ENCODE measurements at regions of chr12 and their contacts with region 1.

Region 1: GRCh38 chr12:26884765-26885576 is 52.0 kb upstream of the ITPR2 start:
- DNase-seq: peak; percentile 91
- ATAC-seq: peak; percentile 96
- H3K4me3 Mint-ChIP-seq: peak overlapping the region; percentile 46
- H3K27ac Mint-ChIP-seq: peak overlapping the region; percentile 23
- H3K4me1 Mint-ChIP-seq: peaks cover 10% of the 10 kb centered on the region
- H3K27me3 Mint-ChIP-seq: peaks cover 5% of the 10 kb centered on the region

Region 2: DNA sequence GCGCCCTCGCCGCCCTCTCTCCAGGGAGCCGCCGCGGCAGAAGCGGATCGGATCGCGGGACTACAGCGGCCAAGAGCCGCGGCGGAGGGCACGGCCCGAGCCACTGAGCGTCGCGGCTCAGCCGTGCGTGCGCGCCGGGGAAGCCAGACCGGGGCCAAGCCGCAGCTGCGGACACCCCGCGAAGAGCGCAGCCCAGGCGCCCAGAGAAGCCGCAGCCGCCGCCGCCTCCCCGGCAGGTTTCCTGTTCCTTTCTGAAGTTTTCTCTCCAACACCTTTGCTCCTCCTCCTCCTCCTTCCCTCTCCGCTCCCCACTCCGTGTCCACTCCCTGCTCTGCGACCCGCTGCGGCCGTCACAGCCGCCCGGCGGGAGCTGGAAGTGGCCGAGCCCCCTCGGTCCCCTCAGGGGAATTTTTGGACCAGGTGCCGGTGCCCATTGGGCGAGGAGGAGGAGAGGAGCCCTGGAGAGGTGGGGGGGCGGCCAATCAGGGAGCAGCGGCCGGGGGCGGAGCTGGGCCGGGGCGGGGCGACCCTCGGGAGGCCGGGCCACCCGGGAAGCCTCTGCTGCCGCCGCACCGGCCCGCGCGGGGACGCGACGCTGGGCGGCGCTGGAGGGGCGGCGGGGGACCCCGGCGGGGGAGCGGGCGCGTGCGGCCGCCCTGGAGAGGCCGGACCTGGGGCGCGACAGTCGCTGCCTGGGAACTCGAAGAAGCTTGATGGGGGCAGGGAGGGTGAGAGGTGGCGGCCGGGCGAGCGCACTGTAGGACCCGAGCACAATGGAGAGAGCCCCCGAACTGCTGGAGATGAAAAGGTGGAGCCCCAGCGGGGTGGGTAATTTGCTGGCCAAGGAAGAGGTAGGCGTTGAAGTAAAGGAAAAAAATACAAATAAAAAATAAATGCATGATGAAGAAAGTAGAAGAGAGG is 51.9 kb before region 1 on chr12 and contains the start of gene ITPR2:
- CTCF ChIA-PET with region 1: interaction called, 38 read pairs
- POLR2A ChIA-PET with region 1: no interaction called
- DNase-seq: peak; percentile 94
- ATAC-seq: peak; percentile 90
- H3K4me3 Mint-ChIP-seq: peak within 1 kb of the TSS; percentile 93
- H3K27ac Mint-ChIP-seq: peak within 1 kb of the TSS; percentile 95
- H3K4me1 Mint-ChIP-seq: peaks cover 36% of the 10 kb centered on the region
- H3K27me3 Mint-ChIP-seq: no peaks in the 10 kb centered on the region
- total RNA-seq, gene ITPR2: 33.5 to 34.6 TPM

Region 3: GRCh38 chr12:26853303-26854030 is 31.5 kb before region 1 on chr12:
- CTCF ChIA-PET with region 1: interaction called, 50 read pairs
- POLR2A ChIA-PET with region 1: no interaction called
- DNase-seq: peak; percentile 83
- ATAC-seq: peak; percentile 96
- H3K4me3 Mint-ChIP-seq: no peak overlapping the region
- H3K27ac Mint-ChIP-seq: no peak overlapping the region
- H3K4me1 Mint-ChIP-seq: no peaks in the 10 kb centered on the region
- H3K27me3 Mint-ChIP-seq: peaks cover 9% of the 10 kb centered on the region

Region 4: GRCh38 chr12:26870491-26871419 is 14.2 kb before region 1 on chr12:
- CTCF ChIA-PET with region 1: interaction called, 37 read pairs
- POLR2A ChIA-PET with region 1: no interaction called
- DNase-seq: no peak
- ATAC-seq: no peak
- H3K4me3 Mint-ChIP-seq: no peak overlapping the region
- H3K27ac Mint-ChIP-seq: no peak overlapping the region
- H3K4me1 Mint-ChIP-seq: peaks cover 28% of the 10 kb centered on the region
- H3K27me3 Mint-ChIP-seq: no peaks in the 10 kb centered on the region

Region 5: DNA sequence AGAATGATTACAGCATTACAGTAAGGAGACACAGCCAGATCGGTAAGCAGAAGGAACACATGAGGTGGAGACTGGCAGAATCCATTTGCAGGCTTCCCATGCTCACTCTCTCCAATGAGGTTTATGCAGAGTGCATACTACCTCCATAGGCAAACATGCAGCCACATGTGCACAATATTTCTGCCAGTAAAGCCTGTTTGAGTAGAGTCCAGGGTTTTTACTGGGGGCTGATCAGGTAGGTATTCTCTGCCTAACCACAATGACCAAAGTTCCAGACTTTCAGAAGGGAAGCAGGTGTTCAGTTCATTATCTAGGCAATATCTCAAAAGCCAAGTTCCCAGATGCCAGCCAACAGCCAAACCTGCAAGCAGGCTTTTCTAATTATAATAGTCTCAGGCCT is 21.7 kb after region 1 on chr12:
- CTCF ChIA-PET with region 1: interaction called, 15 read pairs
- POLR2A ChIA-PET with region 1: no interaction called
- DNase-seq: no peak
- ATAC-seq: no peak
- H3K4me3 Mint-ChIP-seq: no peak overlapping the region
- H3K27ac Mint-ChIP-seq: no peak overlapping the region
- H3K4me1 Mint-ChIP-seq: peaks cover 5% of the 10 kb centered on the region
- H3K27me3 Mint-ChIP-seq: no peaks in the 10 kb centered on the region

Region 6: GRCh38 chr12:27014085-27014858 is 129.3 kb after region 1 on chr12 and contains the start of gene TM7SF3:
- CTCF ChIA-PET with region 1: interaction called, 26 read pairs
- POLR2A ChIA-PET with region 1: no interaction called
- DNase-seq: peak; percentile 97
- ATAC-seq: peak; percentile 88
- H3K4me3 Mint-ChIP-seq: peak within 1 kb of the TSS; percentile 93
- H3K27ac Mint-ChIP-seq: peak within 1 kb of the TSS; percentile 90
- H3K4me1 Mint-ChIP-seq: peaks cover 58% of the 10 kb centered on the region
- H3K27me3 Mint-ChIP-seq: no peaks in the 10 kb centered on the region
- total RNA-seq, gene TM7SF3: 46.2 to 54.0 TPM

Region 7: GRCh38 chr12:27151479-27151878 is 266.5 kb after region 1 on chr12:
- CTCF ChIA-PET with region 1: no interaction called
- POLR2A ChIA-PET with region 1: no interaction called
- DNase-seq: no peak
- ATAC-seq: no peak
- H3K4me3 Mint-ChIP-seq: no peak overlapping the region
- H3K27ac Mint-ChIP-seq: peak overlapping the region; percentile 58
- H3K4me1 Mint-ChIP-seq: peaks cover 37% of the 10 kb centered on the region
- H3K27me3 Mint-ChIP-seq: no peaks in the 10 kb centered on the region